Spleen (tissue), 13 donors: ENCODE measurements at regions of chr1 and their contacts with region 1.

Region 1: GRCh38 chr1:175481126-175482066 is 262.0 kb downstream of the TNR start:
- DNase-seq: no peak
- H3K4me3 ChIP-seq: no peak overlapping the region
- H3K27ac ChIP-seq: no peak overlapping the region
- H3K4me1 ChIP-seq: peaks cover 0 to 4% (median 0%) of the 10 kb centered on the region in 6 donors
- H3K27me3 ChIP-seq: peaks cover 0 to 13% (median 0%) of the 10 kb centered on the region in 7 donors
- CTCF ChIP-seq: peak in 10 of 11 experiments; percentile 17 to 71 (median 56)
- POLR2A ChIP-seq: no peak

Region 2: DNA sequence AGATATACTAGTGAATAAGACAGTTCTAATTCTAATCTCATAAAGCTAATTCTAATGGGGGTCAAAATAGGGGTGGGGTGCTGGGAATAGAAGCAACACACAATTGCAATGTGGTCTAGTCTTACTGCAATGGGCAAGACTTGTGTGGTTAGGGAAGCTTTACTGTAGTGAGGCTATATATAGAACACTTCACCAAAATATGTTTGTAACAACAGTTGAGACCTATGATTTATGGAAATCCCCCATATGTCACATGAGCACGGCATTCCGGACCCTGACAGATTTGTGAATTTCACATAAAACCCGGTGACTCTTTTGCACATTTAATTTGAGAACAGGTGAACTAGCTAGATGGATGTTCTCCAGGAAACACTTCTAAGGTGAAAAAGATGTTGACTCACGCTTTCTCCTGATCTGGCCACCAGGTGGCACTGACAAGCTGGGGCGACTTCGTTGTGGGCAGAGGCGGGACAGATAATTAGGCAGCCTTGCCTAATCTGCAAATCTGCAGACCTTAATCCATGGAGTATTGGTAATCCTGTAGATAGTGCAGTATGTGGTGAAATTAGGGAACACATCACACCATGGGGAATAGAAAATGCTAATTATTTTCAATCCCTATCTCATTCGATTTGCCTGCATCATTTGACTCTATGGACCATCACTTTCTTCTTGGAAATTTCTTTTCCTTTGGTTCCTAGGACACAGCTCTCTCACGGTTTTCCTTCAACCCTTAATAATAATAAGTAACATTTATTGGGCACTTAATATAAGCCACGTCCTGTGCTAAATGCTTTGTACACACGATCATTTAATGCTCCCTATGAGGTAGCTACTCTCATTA is 326.5 kb before region 1 on chr1:
- intact Hi-C with region 1: loop called (anchors 5 kb)
- DNase-seq: peak; percentile 91
- H3K4me3 ChIP-seq: no peak overlapping the region
- H3K27ac ChIP-seq: peak overlapping the region in 2 of 8 donors; percentile 22 to 42
- H3K4me1 ChIP-seq: peaks cover 0 to 29% (median 16%) of the 10 kb centered on the region in 6 donors
- H3K27me3 ChIP-seq: peaks cover 0 to 32% (median 0%) of the 10 kb centered on the region in 7 donors
- CTCF ChIP-seq: peak; percentile 72 to 89 (median 84)
- POLR2A ChIP-seq: no peak

Region 3: DNA sequence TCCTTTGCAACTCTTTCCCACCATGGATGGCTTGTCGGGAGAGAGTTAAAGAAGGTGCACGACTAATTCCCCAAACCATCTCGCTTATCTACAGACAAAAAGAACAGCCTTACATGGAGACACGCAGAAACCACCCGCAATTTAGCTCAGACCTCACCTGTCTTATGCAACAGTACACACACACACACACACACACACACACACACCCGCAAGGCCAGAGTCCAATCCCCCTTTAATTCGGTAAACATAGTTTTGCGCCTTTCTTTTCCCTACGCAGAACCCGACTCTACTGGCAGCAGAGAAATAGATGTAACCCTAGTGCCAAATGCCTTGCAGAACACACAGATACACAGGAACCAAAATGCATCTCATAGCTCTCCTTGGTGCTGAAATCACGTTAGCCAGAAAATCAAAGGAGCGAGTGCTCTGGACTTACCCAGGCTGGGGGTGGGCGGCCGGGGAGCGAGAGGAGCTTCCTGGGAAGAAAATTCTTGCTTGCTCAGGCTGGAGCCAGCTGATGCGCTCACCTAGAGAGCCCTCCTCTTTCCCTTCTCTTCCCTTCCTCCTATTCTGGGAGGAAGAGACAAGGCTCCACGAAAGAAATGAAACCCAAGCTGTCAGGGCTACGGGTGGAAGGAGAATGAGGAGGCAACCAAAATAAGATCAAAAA is 261.5 kb after region 1 on chr1:
- intact Hi-C with region 1: loop called (anchors 5 kb)
- DNase-seq: no peak
- H3K4me3 ChIP-seq: no peak overlapping the region
- H3K27ac ChIP-seq: no peak overlapping the region
- H3K4me1 ChIP-seq: peaks cover 0 to 9% (median 0%) of the 10 kb centered on the region in 6 donors
- H3K27me3 ChIP-seq: peaks cover 0 to 64% (median 5%) of the 10 kb centered on the region in 7 donors
- CTCF ChIP-seq: no peak
- POLR2A ChIP-seq: no peak

Region 4: DNA sequence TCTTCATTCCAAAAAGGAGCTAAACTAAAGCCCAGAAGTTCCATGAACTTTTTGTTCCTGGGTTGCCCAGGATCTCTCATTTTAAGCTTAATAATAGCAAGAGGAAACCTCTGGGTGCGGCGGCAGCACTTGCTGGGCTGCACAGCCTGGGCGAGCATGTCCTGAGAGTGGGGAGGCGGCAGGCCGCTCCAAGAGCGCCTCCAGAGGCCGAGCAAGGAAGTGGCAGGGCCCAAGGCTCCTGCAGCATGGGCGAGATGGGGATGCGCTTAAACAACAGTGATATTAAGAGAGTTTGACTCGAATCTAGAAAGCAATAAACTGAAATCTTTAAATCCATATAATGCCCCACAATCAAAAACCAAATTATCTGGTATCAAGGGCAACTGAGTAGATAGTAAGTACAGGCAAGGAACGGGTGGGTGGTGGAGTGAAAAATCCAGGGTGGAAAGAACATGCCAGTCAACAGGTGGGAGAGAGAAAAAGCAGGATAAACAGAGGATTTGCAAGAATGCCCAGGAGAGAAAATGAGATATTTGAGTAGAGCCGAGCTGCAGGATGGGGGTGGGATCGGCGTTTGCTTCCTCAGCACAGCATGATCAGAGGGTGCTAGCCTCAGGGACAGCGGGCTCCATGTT is 276.1 kb after region 1 on chr1:
- intact Hi-C with region 1: loop called (anchors 5 kb)
- DNase-seq: no peak
- H3K4me3 ChIP-seq: no peak overlapping the region
- H3K27ac ChIP-seq: no peak overlapping the region
- H3K4me1 ChIP-seq: no peaks in the 10 kb centered on the region
- H3K27me3 ChIP-seq: peaks cover 0 to 4% (median 0%) of the 10 kb centered on the region in 7 donors
- CTCF ChIP-seq: peak; percentile 18 to 80 (median 57)
- POLR2A ChIP-seq: no peak

Region 5: DNA sequence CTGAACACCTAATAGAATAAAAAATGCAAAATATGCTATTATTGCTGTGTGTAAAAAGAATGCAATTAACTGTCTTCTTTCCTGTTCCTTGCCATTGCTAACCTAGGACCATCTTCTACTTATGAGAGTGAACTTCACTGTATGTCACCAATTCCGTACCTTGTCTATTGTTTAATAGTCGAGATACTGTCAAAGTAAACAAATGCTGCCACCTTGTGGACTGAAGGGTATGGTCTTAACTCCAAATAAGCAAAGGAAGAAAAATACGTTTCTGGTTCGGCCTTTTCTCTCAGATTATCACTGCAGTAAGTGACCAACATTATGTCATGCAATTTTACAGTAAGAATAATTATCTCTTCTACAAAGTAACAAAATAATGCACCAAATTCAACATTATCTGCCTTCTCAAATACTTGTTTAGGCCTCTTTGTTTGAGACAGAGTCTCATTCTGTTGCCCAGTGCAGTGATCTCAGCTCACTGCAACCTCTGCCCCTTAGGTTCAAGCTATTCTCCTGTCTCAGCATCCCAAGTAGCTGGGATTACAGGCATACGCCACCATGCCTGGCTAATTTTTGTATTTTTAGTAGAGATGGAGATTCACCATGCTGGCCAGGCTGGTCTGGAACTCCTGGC is 592.2 kb after region 1 on chr1:
- intact Hi-C with region 1: loop called (anchors 5 kb)
- DNase-seq: no peak
- H3K4me3 ChIP-seq: no peak overlapping the region
- H3K27ac ChIP-seq: no peak overlapping the region
- H3K4me1 ChIP-seq: peaks cover 0 to 8% (median 0%) of the 10 kb centered on the region in 6 donors
- H3K27me3 ChIP-seq: no peaks in the 10 kb centered on the region
- CTCF ChIP-seq: peak in 10 of 11 experiments; percentile 17 to 74 (median 61)
- POLR2A ChIP-seq: no peak